ENCODE measurements at regions of chr7 and their contacts with region 1.

Region 1: GRCh38 chr7:28062197-28062991 is 118.2 kb downstream of the JAZF1 start:
- DNase-seq: peak; percentile 48
- CTCF ChIP-seq: peak; percentile 74

Region 2: DNA sequence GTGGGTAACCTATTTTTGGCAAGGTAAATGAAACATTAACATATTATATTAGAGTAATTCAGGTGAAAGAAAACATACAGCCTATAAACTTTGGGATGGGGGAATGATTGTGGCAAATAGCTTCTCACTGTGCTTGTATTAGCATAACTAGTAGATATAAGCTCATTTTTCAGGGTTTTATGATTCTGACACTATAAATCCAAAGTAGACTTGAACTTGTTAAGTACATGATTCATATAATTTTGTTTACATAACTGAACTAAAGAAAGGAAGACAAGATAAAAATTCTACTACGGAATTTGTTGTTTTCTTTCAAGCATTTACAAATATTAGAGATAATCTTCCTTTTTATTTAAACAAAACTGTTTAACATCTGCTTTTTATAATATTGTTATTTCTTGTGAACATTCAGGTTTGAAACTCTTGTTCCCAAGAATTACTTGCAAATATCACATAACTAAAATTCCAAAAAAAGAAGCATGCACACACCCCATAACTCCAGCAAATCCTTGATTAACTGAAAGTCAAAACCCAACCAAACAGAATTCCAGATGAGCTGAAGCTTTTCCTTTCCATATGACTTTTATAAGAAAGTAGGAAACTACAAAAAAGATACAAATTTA is 24.1 kb before region 1 on chr7:
- CTCF ChIA-PET with region 1: interaction called, 11 read pairs
- POLR2A ChIA-PET with region 1: no interaction called
- DNase-seq: no peak
- CTCF ChIP-seq: no peak

Region 3: DNA sequence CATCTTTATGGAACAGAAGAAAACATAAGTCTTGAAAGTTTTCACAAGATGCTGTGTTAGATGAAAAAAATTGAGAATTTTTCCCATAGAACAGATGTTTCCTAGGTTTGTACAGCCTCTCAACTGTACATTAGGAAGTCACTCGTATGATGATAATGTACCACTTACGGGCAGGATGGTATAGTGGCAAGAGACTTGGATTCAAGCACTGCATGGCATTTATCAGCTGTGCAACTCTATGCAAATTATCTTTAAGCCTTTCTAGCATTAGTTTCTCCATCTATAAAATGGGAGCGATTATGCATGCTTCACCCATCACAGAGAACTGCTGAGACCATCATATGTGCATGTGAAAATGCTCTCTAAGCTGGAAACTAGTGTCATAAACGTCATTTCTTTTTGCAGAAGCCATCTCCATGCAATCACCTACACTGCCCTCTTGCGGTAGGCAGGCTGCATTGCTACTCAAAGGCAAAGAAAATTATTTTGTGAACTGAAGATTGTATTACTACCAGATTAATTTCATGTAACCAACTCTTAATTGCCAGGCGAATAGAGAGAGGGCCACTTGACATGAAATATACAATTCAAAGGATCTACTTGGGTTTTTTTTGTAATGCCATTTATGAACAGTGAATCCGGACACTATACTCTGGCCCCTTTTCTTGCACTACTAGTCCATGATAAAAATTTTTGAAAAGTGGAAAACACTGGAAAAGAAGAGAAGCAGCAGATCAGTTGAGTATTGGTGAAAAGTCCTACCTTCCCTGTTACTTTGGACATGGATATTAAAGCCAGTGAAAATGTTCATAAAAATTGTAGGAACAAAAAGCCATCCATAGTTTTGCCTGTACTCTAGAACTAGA is 15.9 kb after region 1 on chr7:
- CTCF ChIA-PET with region 1: interaction called, 78 read pairs
- POLR2A ChIA-PET with region 1: no interaction called
- DNase-seq: peak; percentile 46
- CTCF ChIP-seq: peak; percentile 99

Region 4: GRCh38 chr7:28083164-28083997 is 21.0 kb after region 1 on chr7:
- CTCF ChIA-PET with region 1: interaction called, 60 read pairs
- POLR2A ChIA-PET with region 1: no interaction called
- DNase-seq: no peak
- CTCF ChIP-seq: no peak

Region 5: DNA sequence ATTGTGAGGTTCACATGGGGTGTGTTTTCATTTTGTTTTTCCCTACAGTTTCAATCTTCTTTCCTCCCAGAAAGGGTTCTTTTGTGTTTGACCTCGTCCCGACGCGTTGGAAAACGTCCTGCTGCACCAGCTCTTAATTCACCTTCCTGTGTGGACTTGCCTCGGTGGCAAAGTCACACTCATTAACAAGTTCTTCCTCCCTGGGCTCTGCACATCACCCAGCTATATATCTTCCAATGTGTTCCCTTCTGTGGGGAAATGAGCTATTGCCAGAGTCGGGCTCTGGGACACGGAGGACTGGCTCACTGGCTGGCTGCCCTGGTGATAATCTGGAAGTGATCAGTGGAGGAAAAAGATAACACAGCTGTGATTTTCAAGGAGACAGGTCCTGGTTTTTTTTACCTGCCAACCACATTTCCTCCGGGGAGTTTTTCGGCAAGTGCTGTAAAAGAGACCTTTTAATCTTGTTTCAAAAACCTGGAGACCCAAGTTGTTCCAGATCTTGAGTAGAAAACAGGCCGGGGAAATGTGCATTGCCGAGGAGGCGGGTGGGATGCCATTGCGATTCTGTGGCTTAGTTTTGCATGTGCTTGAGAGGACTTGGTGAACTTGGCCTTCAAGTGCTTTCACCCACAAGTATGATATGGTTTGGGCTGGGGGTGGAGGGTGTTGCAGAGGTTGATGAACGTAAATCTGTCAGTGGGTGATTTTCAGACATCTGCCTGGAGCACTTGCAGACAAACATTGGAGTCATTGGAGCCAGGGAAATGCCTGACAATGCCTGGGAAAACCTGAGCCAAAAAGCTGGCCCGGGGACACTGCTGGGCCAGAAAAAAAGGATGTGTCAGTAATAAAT is 253.4 kb after region 1 on chr7:
- CTCF ChIA-PET with region 1: no interaction called
- POLR2A ChIA-PET with region 1: no interaction called
- DNase-seq: no peak
- CTCF ChIP-seq: no peak